ENCODE measurements at regions of chr11 and their contacts with region 1.

Region 1: DNA sequence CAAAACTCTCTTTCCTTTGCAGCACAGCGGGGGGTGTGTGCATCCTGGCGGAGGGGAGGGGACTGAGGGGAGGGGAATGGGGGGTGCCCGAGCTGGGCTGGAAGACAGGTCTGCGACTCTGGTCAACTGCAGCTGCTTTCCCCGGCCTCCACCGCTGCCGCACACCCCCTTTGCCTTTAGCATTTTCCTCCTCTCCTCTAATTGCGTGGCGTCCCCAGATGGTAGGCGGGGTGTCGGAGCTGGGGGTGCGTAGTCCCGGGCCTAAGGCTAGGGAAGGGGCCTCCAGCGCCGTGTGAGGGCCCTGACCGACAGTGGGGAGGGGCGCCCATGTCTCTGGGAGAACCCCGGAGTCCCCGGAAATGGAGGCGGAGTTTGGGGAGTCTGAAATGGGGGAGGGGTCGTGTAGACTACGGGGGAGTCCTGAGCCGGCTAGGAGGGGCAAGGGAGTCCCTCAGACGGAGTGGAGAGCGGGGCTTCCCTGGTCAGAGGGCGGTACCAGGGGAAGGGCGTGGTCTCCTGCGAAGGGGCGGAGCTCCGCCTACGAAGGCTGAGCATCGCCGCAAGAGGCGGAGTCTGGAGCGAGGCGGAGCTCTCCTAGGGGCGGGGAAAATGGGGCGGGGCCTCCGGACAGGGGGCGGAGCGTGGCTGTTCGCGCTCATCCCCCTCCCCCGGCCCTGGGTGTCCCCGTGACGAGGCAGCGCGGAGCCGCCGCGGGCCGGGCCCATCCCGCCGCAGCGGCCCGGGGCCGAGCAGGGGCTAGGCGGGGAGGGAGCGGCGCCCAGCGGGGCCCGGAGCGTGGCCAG is at the start of gene PELI3:
- DNase-seq: peak; percentile 92
- H3K4me3 Mint-ChIP-seq: peak within 1 kb of the TSS; percentile 86
- H3K27ac Mint-ChIP-seq: peak within 1 kb of the TSS; percentile 81
- H3K4me1 Mint-ChIP-seq: peaks cover 8% of the 10 kb centered on the region
- H3K27me3 Mint-ChIP-seq: no peaks in the 10 kb centered on the region
- CTCF ChIP-seq: no peak
- total RNA-seq, gene PELI3: 7.6 and 8.1 TPM in 2 replicates

Region 2: DNA sequence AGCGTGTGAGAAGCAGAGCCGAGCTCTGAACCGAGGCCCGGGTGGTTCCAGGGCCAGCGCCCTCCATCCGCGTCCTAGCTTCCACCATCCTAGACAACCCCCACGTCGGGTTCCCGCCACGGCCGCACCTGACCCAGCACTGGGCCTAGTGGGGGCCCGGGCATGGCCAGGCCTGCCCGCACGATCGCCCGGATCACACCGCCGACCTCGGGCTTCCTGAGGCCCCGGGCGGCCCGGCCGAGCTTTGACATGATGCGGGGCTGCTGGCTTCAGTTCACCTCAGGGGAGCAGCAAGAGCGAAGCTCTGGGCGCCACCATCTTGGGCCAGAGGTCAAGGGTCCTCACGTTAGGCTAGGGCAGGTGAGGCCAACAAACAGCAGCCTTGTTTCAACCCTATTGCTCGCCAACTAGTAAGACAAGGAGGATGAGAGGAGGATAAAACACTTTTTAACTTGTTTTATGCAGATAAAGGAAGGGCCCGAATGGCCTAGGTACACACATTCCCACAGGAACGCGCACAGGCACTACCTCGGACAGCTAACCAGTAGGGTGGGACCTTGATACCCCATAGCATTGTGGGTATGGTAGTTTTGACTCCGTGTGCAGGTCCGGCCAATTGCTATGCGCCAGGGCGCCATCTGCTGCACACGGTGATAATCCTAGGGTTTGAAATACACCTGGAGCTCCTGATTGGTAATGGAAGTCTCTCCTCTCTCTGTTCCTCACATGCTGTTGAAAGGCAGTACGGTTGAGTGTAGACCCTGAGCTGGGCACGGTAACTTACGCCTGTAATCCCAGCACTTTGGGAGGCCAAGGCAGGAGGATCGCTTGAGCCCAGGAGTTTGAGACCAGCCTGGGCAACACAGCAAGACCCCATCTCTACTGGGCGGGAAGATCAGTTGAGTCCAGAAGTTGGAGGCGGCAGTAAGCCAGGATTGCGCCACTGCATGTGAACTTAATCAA is 27.6 kb before region 1 on chr11 and contains the start of gene MRPL11:
- CTCF ChIA-PET with region 1: interaction called, 14 read pairs
- intact Hi-C with region 1: no loop called
- DNase-seq: peak; percentile 93
- H3K4me3 Mint-ChIP-seq: peak within 1 kb of the TSS; percentile 86
- H3K27ac Mint-ChIP-seq: peak within 1 kb of the TSS; percentile 87
- H3K4me1 Mint-ChIP-seq: no peaks in the 10 kb centered on the region
- H3K27me3 Mint-ChIP-seq: peaks cover 20% of the 10 kb centered on the region
- CTCF ChIP-seq: peak; percentile 59
- total RNA-seq, gene MRPL11: 76.1 and 79.6 TPM in 2 replicates

Region 3: DNA sequence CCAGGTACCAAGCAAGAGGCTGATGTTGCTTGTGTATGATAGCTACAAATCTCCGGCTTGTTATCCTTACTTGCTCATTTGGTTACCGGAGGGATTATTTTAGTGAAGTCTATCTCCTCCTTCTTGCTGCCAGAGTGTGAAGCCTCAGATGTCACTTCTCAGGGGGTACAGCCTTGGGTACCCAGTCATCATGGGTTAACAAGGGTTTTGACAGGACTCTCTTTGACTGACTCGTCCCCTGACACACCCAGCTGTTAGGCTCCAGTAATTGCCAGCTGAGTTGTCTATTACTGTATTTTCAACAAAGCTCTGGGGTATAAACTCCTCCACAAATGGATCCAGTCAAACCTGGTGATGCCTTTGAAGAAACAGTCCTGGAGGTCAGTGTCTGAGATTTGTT is 11.6 kb before region 1 on chr11:
- CTCF ChIA-PET with region 1: interaction called, 14 read pairs
- intact Hi-C with region 1: no loop called
- DNase-seq: no peak
- H3K4me3 Mint-ChIP-seq: no peak overlapping the region
- H3K27ac Mint-ChIP-seq: no peak overlapping the region
- H3K4me1 Mint-ChIP-seq: peaks cover 18% of the 10 kb centered on the region
- H3K27me3 Mint-ChIP-seq: peaks cover 47% of the 10 kb centered on the region
- CTCF ChIP-seq: no peak

Region 4: GRCh38 chr11:66720223-66720947 is 254.0 kb after region 1 on chr11:
- CTCF ChIA-PET with region 1: no interaction called
- intact Hi-C with region 1: no loop called
- DNase-seq: peak; percentile 97
- H3K4me3 Mint-ChIP-seq: peak overlapping the region; percentile 67
- H3K27ac Mint-ChIP-seq: peak overlapping the region; percentile 89
- H3K4me1 Mint-ChIP-seq: peaks cover 52% of the 10 kb centered on the region
- H3K27me3 Mint-ChIP-seq: no peaks in the 10 kb centered on the region
- CTCF ChIP-seq: no peak

Measured in Calu3 (cell line).